ENCODE measurements at regions of chr18 and their contacts with region 1.

Region 1: DNA sequence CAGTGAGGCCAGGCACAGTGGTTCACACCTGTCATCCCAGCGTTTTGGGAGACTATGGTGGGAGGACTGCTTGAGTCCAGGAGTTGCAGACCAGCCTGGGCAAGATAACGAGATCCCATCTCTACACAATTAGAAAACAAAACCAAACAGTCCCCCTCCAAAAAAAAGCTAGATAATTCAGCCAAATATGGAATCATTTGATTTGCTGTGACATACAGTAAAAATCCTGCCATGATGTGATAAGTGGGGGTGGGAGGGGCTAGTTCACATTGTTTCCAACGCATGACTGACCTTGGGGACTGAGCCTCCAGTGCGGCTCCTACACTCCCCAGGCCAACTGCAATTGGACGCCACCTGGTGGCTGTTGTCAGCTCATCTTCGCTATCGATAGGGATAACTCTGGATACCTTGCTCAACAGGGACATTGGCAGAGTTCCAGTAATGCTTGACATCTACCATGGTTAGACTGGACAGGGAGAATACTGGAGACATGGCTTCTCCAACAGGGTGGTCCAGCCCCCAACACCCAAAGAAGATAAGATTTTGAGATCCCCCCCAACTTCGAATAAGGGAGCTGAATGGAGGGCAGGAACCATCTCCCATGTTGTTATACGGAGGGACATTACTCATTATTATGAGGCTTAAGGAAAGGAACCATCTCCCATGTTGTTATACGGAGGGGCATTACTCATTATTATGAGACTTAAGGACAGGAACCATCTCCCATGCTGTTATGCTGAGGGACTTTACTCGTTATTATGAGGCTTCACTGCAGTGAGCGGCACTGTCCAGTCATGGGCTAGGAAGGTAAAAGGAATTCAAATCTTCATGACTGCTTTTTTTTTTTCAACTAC is 135.9 kb downstream of the TGIF1 start:
- DNase-seq: peak; percentile 90
- ATAC-seq: peak; percentile 86
- H3K4me3 Mint-ChIP-seq: no peak overlapping the region
- H3K27ac Mint-ChIP-seq: peak overlapping the region; percentile 96
- H3K4me1 Mint-ChIP-seq: peaks cover 63% of the 10 kb centered on the region
- H3K27me3 Mint-ChIP-seq: peaks cover 7% of the 10 kb centered on the region
- CTCF ChIP-seq: peak; percentile 72

Region 2: DNA sequence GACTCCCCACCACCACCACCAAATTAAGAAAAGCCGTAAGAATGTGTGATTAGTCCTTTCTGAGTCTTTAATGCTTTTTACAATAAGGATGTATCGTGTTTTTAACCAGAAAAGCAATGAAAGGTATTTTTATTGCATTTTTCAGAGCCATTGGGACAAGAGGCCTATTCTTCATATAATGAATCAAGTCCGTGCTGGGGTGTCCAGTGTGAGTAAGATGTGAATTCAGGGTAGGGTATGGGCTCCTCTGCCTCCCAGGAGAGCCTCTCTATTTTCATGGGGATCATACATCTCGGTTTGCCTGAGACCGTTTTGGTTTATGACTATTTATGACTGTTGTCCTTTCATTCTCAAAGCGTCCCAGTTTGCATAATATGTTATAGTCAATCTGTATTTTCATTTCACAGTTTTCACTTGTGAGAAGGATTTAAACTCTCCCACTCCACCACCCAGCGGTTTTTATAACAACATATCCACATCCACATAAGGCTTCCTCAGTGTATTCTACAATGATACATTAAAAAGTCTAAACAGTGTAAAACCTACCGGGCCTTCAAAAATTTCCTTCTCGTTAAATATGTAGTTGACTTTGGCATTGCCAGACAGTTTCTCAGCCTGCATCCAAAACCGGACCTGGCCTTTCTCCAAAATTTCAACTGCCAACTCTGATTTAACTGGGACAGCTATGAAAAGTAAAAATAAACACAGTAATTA is 492.1 kb before region 1 on chr18:
- CTCF ChIA-PET with region 1: no interaction called
- POLR2A ChIA-PET with region 1: no interaction called
- DNase-seq: no peak
- ATAC-seq: no peak
- H3K4me3 Mint-ChIP-seq: no peak overlapping the region
- H3K27ac Mint-ChIP-seq: no peak overlapping the region
- H3K4me1 Mint-ChIP-seq: peaks cover 16% of the 10 kb centered on the region
- H3K27me3 Mint-ChIP-seq: no peaks in the 10 kb centered on the region
- CTCF ChIP-seq: no peak

Region 3: GRCh38 chr18:3297025-3297984 is 288.6 kb before region 1 on chr18:
- CTCF ChIA-PET with region 1: interaction called, 17 read pairs
- POLR2A ChIA-PET with region 1: no interaction called
- DNase-seq: peak; percentile 97
- ATAC-seq: peak; percentile 94
- H3K4me3 Mint-ChIP-seq: peak overlapping the region; percentile 91
- H3K27ac Mint-ChIP-seq: peak overlapping the region; percentile 83
- H3K4me1 Mint-ChIP-seq: peaks cover 18% of the 10 kb centered on the region
- H3K27me3 Mint-ChIP-seq: peaks cover 4% of the 10 kb centered on the region; the same call in 1 of the 2 replicates
- CTCF ChIP-seq: peak; percentile 59

Region 4: DNA sequence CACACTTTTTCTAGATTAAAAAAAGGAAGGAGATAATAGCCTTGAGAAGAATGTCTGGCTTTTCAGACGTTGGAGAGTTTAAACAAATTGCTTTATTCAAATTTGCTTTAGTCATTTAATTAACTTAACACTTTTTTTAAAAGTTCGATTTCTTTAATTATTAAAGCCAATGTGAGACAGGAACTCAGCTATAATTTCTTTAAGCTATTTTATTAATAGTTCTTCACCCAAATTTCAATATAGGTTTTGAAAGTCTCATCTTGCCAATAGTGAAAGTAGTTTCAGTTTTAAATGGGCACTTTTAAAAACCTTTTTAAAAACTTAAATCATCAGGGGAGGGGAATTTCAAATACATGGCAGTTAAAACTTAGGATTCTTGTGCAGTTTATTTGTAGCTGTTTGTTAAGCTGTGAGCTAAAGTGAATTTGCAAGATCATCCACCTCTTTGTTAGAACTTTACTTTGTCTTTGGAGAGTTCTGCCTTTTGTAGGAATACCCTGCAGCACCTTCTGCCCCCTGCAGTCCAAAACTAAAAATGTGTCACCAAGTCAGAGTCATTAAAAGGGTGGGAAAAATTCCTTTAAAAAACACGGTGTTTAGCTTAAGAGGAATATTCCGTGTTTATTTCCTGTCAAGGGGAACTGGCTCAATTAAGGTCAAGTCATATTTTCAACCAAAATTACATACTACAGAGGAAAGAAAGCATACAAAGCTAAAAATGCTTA is 131.4 kb before region 1 on chr18:
- CTCF ChIA-PET with region 1: interaction called, 25 read pairs
- POLR2A ChIA-PET with region 1: interaction called, 4 read pairs
- DNase-seq: peak; percentile 45
- ATAC-seq: peak; percentile 7
- H3K4me3 Mint-ChIP-seq: peak overlapping the region; percentile 96
- H3K27ac Mint-ChIP-seq: peak overlapping the region; percentile 98
- H3K4me1 Mint-ChIP-seq: peaks cover 62% of the 10 kb centered on the region
- H3K27me3 Mint-ChIP-seq: no peaks in the 10 kb centered on the region
- CTCF ChIP-seq: peak; percentile 46

Region 5: GRCh38 chr18:3481696-3482210 is 104.1 kb before region 1 on chr18:
- CTCF ChIA-PET with region 1: interaction called, 31 read pairs
- POLR2A ChIA-PET with region 1: no interaction called
- DNase-seq: peak; percentile 52
- ATAC-seq: peak; percentile 94
- H3K4me3 Mint-ChIP-seq: no peak overlapping the region
- H3K27ac Mint-ChIP-seq: peak overlapping the region; percentile 71; the same call in 1 of the 2 replicates
- H3K4me1 Mint-ChIP-seq: peaks cover 28% of the 10 kb centered on the region
- H3K27me3 Mint-ChIP-seq: no peaks in the 10 kb centered on the region
- CTCF ChIP-seq: peak; percentile 36; the same call in 1 of the 2 replicates

Region 6: GRCh38 chr18:3525870-3526420 is 59.9 kb before region 1 on chr18:
- CTCF ChIA-PET with region 1: interaction called, 12 read pairs
- POLR2A ChIA-PET with region 1: no interaction called
- DNase-seq: no peak
- ATAC-seq: peak; percentile 48; the same call in 1 of the 2 replicates
- H3K4me3 Mint-ChIP-seq: no peak overlapping the region
- H3K27ac Mint-ChIP-seq: peak overlapping the region; percentile 98
- H3K4me1 Mint-ChIP-seq: peaks cover 40% of the 10 kb centered on the region
- H3K27me3 Mint-ChIP-seq: peaks cover 3% of the 10 kb centered on the region; the same call in 1 of the 2 replicates
- CTCF ChIP-seq: no peak

Region 7: DNA sequence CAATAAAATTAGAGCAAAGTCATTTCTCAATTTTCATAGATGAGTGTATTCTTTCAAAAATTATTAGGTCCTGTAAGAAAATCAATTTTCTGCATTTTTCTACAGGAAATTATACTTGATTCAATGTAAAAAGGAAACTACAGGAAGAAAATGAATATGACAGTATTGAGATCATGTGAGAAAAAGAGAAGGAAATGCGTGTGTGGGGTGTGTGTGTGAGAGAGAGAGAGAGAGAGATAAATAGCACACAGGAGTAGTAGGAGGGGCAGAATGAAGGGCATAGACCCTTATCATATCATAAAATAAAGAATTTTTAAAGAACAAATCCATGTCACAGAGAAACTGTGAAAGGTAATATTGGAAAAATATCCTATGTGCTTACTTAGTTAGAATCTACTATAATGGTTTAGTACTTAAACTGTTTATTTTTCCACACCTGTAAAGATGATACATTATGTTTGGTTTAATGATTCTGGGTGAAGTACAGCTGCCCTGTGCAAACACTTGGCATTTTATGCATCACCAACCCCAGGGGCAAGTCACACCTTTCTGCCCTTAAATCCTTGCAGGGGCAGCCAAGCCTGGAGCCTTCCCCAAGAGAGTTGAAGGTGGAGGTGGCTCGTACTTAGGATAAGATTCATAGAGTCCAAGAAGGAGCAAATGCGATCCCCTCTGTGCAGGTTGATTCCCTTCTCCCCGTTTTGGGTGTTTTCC is 140.5 kb after region 1 on chr18:
- CTCF ChIA-PET with region 1: no interaction called
- POLR2A ChIA-PET with region 1: no interaction called
- DNase-seq: no peak
- ATAC-seq: no peak
- H3K4me3 Mint-ChIP-seq: no peak overlapping the region
- H3K27ac Mint-ChIP-seq: no peak overlapping the region
- H3K4me1 Mint-ChIP-seq: peaks cover 23% of the 10 kb centered on the region
- H3K27me3 Mint-ChIP-seq: no peaks in the 10 kb centered on the region
- CTCF ChIP-seq: no peak

Region 8: GRCh38 chr18:3821524-3821923 is 235.6 kb after region 1 on chr18:
- CTCF ChIA-PET with region 1: no interaction called
- POLR2A ChIA-PET with region 1: no interaction called
- DNase-seq: no peak
- ATAC-seq: peak; percentile 69
- H3K4me3 Mint-ChIP-seq: no peak overlapping the region
- H3K27ac Mint-ChIP-seq: peak overlapping the region; percentile 59
- H3K4me1 Mint-ChIP-seq: peaks cover 25% of the 10 kb centered on the region
- H3K27me3 Mint-ChIP-seq: no peaks in the 10 kb centered on the region
- CTCF ChIP-seq: no peak